B cell (primary cell): ENCODE measurements at regions of chr5 and their contacts with region 1.

Region 1: DNA sequence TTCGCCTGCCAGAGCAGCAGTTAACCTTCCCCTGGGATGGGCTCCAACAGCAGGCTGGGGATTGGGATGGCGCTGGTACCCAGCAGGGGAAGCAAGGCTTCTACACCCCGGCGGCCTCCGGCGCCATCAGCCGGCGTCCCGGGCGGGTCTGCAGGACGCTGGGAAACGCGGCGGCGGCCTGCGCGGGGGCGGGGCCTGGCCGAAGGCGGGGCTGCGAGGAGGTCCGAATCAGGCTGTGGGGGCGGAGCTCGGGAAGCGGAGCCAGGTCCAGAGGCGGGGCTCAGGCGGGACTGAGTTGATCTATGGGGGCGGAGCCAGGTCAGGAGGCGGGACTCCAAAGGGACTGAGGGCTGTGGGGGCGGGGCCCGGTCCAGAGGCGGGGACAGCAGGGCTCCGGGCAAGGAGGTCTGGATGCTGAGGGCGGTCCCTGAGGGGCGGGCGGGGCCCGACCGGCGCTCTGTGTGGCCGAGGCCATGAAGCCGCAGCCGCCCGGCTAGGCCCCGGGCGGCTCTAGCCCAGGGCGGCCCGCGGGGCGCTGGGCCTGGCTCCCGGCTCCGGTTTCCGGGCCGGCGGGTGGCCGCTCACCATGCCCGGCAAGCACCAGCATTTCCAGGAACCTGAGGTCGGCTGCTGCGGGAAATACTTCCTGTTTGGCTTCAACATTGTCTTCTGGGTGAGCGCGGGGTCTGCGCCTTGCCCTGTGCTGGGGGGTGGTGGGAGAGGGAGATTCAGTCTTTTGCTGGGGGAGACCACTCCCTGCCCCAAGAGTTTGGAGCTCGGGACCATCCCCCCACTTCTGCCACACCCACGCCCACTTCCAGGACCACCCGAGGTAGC is at the start of gene TSPAN17:
- DNase-seq: peak; percentile 99
- ATAC-seq: peak; percentile 97
- H3K4me3 ChIP-seq: peak within 1 kb of the TSS; percentile 12 to 72 (median 64)
- H3K4me3 Mint-ChIP-seq: peak within 1 kb of the TSS; percentile 92
- H3K27ac ChIP-seq: peak within 1 kb of the TSS; percentile 36 to 68
- H3K27ac Mint-ChIP-seq: peak within 1 kb of the TSS; percentile 90
- H3K4me1 ChIP-seq: peaks cover 21 to 52% of the 10 kb centered on the region in 2 donors
- H3K4me1 Mint-ChIP-seq: peaks cover 50% of the 10 kb centered on the region
- H3K27me3 ChIP-seq: no peaks in the 10 kb centered on the region
- H3K27me3 Mint-ChIP-seq: no peaks in the 10 kb centered on the region
- CTCF ChIP-seq: no peak
- total RNA-seq, gene TSPAN17: 21.0 and 23.7 TPM in 2 replicates

Region 2: DNA sequence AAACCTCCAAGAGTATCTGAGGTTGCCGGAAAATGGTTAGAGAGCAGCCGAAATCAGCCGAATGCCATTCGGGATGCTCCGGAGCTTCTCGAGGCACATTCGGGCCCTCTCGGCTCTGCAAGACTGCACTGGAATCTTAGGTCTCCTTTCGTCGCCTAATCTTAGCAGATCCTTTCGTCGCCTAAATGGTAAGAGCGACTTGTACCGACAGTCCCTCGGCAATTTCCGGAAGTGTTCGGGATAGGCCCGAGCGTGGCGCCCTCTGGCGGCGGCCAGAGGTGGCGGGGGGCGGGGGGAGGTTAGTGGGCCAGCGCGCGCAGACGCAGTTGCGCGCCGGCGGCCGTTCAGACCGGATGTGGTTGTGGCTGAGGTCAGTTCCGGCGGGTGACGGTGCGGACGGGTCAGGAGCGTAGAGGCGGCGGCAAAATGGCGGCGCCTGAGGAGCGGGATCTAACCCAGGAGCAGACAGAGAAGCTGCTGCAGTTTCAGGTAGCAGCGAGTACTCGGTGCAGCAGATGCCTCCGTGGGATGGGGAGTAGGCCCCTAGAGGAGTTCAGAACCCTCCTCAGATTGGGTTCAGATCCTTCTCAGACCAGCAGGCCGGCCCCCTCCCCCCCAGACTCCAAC is 199.2 kb before region 1 on chr5 and contains the start of gene FAF2:
- CTCF ChIA-PET with region 1: no interaction called
- POLR2A ChIA-PET with region 1: interaction called, 3 read pairs
- intact Hi-C with region 1: loop called (anchors 1 kb)
- DNase-seq: peak; percentile 99
- ATAC-seq: peak; percentile 91
- H3K4me3 ChIP-seq: peak within 1 kb of the TSS; percentile 77 to 99 (median 99)
- H3K4me3 Mint-ChIP-seq: peak within 1 kb of the TSS; percentile 98
- H3K27ac ChIP-seq: peak within 1 kb of the TSS; percentile 81 to 93
- H3K27ac Mint-ChIP-seq: peak within 1 kb of the TSS; percentile 99
- H3K4me1 ChIP-seq: peaks cover 16 to 20% of the 10 kb centered on the region in 2 donors
- H3K4me1 Mint-ChIP-seq: peaks cover 32% of the 10 kb centered on the region
- H3K27me3 ChIP-seq: no peaks in the 10 kb centered on the region
- H3K27me3 Mint-ChIP-seq: no peaks in the 10 kb centered on the region
- CTCF ChIP-seq: peak; percentile 92
- total RNA-seq, gene FAF2: 35.1 and 41.3 TPM in 2 replicates

Region 3: DNA sequence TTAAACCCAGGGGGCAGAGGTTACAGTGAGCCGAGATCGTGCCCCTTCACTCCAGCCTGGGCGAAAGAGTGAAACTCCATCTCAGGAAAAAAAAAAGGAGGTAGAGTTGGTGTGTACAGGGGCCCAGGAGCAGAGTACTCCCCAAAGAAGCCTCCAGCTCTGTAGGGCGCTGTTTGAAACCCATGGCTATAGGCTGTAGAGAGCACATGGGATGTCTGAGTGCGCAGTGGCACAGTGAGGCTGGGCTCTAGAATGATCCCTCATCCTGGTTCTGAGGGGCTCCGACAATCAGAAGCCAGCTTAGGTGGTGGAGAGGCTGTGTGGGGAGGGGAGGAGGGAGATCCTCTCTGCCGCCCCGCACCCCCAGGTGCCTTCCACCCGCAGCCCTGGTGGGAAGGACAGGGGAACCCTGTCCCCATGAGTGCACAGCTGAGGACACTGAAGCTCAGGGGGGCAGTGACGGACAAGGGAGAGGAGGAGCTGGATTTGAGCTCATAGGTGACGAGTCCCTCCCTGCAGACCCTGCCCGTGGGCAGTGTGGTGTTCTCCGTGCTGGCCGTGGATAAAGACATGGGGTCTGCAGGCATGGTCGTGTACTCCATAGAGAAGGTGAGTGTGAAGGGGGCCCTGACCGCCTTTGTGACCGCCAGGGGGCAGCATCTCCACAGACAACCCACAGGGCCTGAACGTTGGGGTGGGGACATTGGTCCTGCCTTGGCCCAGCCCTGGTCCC is 73.5 kb before region 1 on chr5:
- CTCF ChIA-PET with region 1: no interaction called
- POLR2A ChIA-PET with region 1: no interaction called
- intact Hi-C with region 1: loop called (anchors 1 kb)
- DNase-seq: peak; percentile 82
- ATAC-seq: peak; percentile 79
- H3K4me3 ChIP-seq: no peak overlapping the region
- H3K4me3 Mint-ChIP-seq: no peak overlapping the region
- H3K27ac ChIP-seq: no peak overlapping the region
- H3K27ac Mint-ChIP-seq: no peak overlapping the region
- H3K4me1 ChIP-seq: peaks cover 0 to 11% of the 10 kb centered on the region in 2 donors
- H3K4me1 Mint-ChIP-seq: peaks cover 5% of the 10 kb centered on the region
- H3K27me3 ChIP-seq: peaks cover 0 to 7% (median 2%) of the 10 kb centered on the region in 4 experiments
- H3K27me3 Mint-ChIP-seq: peaks cover 12% of the 10 kb centered on the region
- CTCF ChIP-seq: peak; percentile 92

Region 4: DNA sequence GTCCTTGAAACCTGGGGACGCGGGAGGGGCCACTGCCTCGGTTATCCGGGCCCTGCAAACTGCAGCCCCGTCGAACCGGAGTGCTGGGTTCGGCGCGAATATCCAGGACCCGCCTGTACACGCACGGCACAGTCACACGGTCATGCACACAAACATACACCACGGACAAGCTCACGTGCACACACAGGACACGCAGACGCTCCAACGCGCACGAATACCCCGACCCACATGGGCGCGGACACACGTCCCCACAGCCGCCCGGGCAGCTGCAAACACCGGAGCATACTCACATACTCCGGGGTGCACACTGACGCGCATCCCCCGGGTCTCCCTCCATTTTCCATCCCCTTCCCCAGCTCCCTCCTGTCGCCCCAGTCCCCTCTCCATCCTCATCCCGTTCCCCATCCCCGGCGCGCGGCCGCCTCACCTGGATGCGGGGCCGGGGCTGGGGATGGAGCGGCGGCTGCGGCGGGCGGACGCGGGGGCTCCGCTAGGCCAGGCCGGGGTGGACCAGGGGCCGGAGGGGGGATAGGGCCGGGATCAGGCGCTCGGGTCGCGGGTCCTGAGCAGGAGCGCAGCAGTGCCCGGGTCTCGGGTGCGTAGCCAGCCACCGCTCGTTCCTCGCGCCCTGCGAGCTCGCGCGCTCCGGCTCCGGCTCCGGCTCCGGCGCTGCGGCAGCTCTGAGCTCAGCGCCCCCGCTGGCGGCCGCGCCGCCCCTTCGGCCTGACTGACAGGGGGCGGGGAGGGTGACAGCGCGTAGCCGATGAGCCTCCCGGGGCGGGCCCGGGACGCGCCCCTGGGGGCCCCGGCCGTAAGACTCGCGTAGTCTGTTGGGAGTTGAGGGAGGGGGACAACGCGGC is 17.2 kb before region 1 on chr5 and contains the starts of genes EIF4E1B and SNCB:
- CTCF ChIA-PET with region 1: interaction called, 6 read pairs
- POLR2A ChIA-PET with region 1: interaction called, 12 read pairs
- intact Hi-C with region 1: loop called (anchors 1 kb)
- DNase-seq: peak; percentile 80
- ATAC-seq: peak; percentile 93
- H3K4me3 ChIP-seq: peak within 1 kb of the TSS; percentile 28 to 69 (median 51)
- H3K4me3 Mint-ChIP-seq: peak within 1 kb of the TSS; percentile 86
- H3K27ac ChIP-seq: no peak within 1 kb of the TSS
- H3K27ac Mint-ChIP-seq: peak within 1 kb of the TSS; percentile 16
- H3K4me1 ChIP-seq: peaks cover 55 to 65% of the 10 kb centered on the region in 2 donors
- H3K4me1 Mint-ChIP-seq: peaks cover 61% of the 10 kb centered on the region
- H3K27me3 ChIP-seq: peaks cover 0 to 39% (median 21%) of the 10 kb centered on the region in 4 experiments
- H3K27me3 Mint-ChIP-seq: peaks cover 34% of the 10 kb centered on the region
- CTCF ChIP-seq: no peak
- total RNA-seq, gene EIF4E1B: not detected in 2 replicates
- total RNA-seq, gene SNCB: not detected in 2 replicates

Region 5: DNA sequence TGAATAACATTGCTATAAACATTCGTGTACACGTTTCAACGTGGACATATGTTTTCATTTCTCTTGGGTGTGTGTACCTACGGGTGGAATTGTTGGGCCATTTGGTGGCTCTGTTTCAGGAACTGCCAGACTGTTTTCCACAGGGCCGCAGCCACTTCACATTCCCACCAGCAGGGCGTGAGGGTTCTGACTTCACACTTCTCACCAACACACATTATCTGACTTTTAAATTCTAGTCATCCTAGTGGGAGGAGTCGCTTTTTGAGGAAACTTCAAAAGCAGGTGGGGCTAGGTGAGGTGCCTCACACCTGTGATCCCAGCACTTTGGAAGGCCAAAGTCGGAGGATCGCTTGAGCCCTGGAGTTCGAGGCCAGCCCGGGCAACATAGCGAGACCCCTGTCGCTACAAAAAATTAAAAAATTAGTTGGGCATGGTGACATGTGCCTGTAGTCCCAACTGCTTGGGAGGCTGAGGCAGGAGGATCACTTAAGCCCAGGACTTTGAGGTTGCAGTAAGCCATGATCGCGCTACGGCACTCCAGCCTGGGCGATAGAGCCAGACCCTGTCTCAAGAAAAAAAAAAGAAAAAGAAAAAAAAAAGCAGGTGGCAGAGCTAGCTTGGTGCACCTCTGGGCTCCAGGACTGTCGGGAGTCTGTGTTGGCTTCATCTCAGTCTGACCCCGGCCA is 28.6 kb after region 1 on chr5:
- CTCF ChIA-PET with region 1: no interaction called
- POLR2A ChIA-PET with region 1: no interaction called
- intact Hi-C with region 1: no loop called
- DNase-seq: no peak
- ATAC-seq: no peak
- H3K4me3 ChIP-seq: no peak overlapping the region
- H3K4me3 Mint-ChIP-seq: no peak overlapping the region
- H3K27ac ChIP-seq: no peak overlapping the region
- H3K27ac Mint-ChIP-seq: no peak overlapping the region
- H3K4me1 ChIP-seq: no peaks in the 10 kb centered on the region
- H3K4me1 Mint-ChIP-seq: peaks cover 3% of the 10 kb centered on the region
- H3K27me3 ChIP-seq: peaks cover 0 to 32% (median 7%) of the 10 kb centered on the region in 4 experiments
- H3K27me3 Mint-ChIP-seq: peaks cover 62% of the 10 kb centered on the region
- CTCF ChIP-seq: no peak

Region 6: GRCh38 chr5:176739461-176740051 is 92.3 kb after region 1 on chr5:
- CTCF ChIA-PET with region 1: no interaction called
- POLR2A ChIA-PET with region 1: no interaction called
- intact Hi-C with region 1: no loop called
- DNase-seq: no peak
- ATAC-seq: no peak
- H3K4me3 ChIP-seq: no peak overlapping the region
- H3K4me3 Mint-ChIP-seq: no peak overlapping the region
- H3K27ac ChIP-seq: no peak overlapping the region
- H3K27ac Mint-ChIP-seq: no peak overlapping the region
- H3K4me1 ChIP-seq: peaks cover 16 to 17% of the 10 kb centered on the region in 2 donors
- H3K4me1 Mint-ChIP-seq: peaks cover 11% of the 10 kb centered on the region
- H3K27me3 ChIP-seq: peaks cover 0 to 54% (median 12%) of the 10 kb centered on the region in 4 experiments
- H3K27me3 Mint-ChIP-seq: peaks cover 71% of the 10 kb centered on the region
- CTCF ChIP-seq: no peak